ENCODE measurements at regions of chr7 and their contacts with region 1.

Region 1: DNA sequence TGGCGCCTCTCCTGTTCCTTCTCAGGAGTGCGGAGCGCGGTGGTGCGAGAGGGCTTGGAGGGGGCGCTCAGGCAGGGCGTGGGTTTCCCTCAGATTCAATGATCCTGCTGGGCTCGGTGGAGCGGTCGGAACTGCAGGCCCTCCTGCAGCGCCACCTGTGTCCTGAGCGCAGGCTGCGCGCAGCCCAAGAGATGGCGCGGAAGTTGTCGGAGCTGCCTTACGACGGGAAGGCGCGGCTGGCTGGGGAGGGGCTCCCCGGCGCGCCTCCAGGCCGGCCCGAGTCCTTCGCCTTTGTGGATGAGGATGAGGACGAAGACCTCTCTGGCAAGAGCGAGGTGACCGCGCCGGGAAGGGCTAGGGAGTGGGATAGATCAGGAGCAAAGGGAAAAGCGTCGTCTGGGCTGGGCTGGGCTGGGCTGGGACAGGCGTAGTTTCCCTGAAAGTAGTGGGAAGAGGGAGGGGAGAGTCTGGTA is 17.0 kb downstream of the FAM131B start:
- DNase-seq: peak; percentile 78 to 82
- ATAC-seq: peak; percentile 99 to 100
- H3K4me3 ChIP-seq: peak overlapping the region; percentile 19; the same call in 2 of the 3 replicates
- H3K27ac ChIP-seq: peak overlapping the region; percentile 44 to 63; a peak in 5 of 6 replicates
- H3K4me1 ChIP-seq: no peaks in the 10 kb centered on the region
- CTCF ChIP-seq: peak; percentile 64
- EP300 ChIP-seq: no peak
- POLR2A ChIP-seq: no peak; the same call in 1 of the 2 replicates
- RAD21 ChIP-seq: peak; percentile 36 to 53

Region 2: GRCh38 chr7:142873281-142873787 is 472.1 kb before region 1 on chr7:
- CTCF ChIA-PET with region 1: no interaction called
- POLR2A ChIA-PET with region 1: no interaction called
- DNase-seq: peak; percentile 33 to 38
- ATAC-seq: peak in 1 of 2 experiments; percentile 83; a peak in 3 of 6 replicates
- H3K4me3 ChIP-seq: no peak overlapping the region
- H3K27ac ChIP-seq: no peak overlapping the region
- H3K4me1 ChIP-seq: no peaks in the 10 kb centered on the region
- CTCF ChIP-seq: no peak
- EP300 ChIP-seq: no peak
- POLR2A ChIP-seq: no peak
- RAD21 ChIP-seq: no peak; a peak in 1 of 5 replicates

Region 3: GRCh38 chr7:143331179-143331820 is 14.2 kb before region 1 on chr7:
- CTCF ChIA-PET with region 1: interaction called, 14 read pairs
- POLR2A ChIA-PET with region 1: no interaction called
- DNase-seq: peak; percentile 38 to 72
- ATAC-seq: peak; percentile 83 to 88
- H3K4me3 ChIP-seq: no peak overlapping the region
- H3K27ac ChIP-seq: peak overlapping the region; percentile 41 to 72; a peak in 5 of 6 replicates
- H3K4me1 ChIP-seq: peaks cover 31% of the 10 kb centered on the region
- CTCF ChIP-seq: no peak
- EP300 ChIP-seq: no peak
- POLR2A ChIP-seq: no peak
- RAD21 ChIP-seq: no peak

Region 4: GRCh38 chr7:143355450-143356385 is 10.3 kb after region 1 on chr7:
- CTCF ChIA-PET with region 1: interaction called, 15 read pairs
- POLR2A ChIA-PET with region 1: no interaction called
- DNase-seq: peak in 1 of 2 experiments; percentile 12
- ATAC-seq: peak in 1 of 2 experiments; percentile 47; a peak in 2 of 6 replicates
- H3K4me3 ChIP-seq: no peak overlapping the region
- H3K27ac ChIP-seq: no peak overlapping the region
- H3K4me1 ChIP-seq: no peaks in the 10 kb centered on the region
- CTCF ChIP-seq: no peak
- EP300 ChIP-seq: no peak
- POLR2A ChIP-seq: no peak
- RAD21 ChIP-seq: 0 out of 5 replicates have a peak, but pooled peaks of 1 of the 2 experiments have one; percentile 7

Measured in A549 (cell line).